CD8-positive, alpha-beta memory T cell (primary cell): ENCODE measurements at regions of chr14 and their contacts with region 1.

Region 1: DNA sequence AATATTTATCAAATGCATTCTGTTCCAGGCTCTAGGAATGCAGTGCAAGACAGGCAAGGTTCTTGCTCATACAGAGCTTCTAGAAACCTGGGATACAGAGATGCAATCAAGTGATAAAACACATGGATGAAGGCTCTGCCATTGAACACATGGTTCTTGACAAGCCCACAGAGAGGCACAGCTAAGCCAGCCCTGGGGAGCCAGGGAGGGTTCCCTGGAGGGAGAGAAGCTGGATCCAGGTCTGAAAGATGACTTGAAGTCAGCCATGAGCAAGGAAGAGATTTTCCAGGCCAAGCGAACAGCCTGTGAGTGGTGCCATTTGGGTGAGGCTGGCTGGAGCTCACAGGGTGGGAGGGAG is 66.2 kb downstream of the IRF2BPL start:
- DNase-seq: no peak
- H3K4me3 ChIP-seq: peak overlapping the region; percentile 60
- H3K4me3 Mint-ChIP-seq: peak overlapping the region; percentile 76 to 90 (median 81)
- H3K27ac ChIP-seq: peak overlapping the region; percentile 71
- H3K27ac Mint-ChIP-seq: peak overlapping the region; percentile 83 to 99 (median 94)
- H3K4me1 ChIP-seq: peaks cover 58% of the 10 kb centered on the region
- H3K4me1 Mint-ChIP-seq: peaks cover 71 to 81% (median 81%) of the 10 kb centered on the region in 3 donors
- H3K27me3 ChIP-seq: no peaks in the 10 kb centered on the region
- H3K27me3 Mint-ChIP-seq: no peaks in the 10 kb centered on the region

Region 2: DNA sequence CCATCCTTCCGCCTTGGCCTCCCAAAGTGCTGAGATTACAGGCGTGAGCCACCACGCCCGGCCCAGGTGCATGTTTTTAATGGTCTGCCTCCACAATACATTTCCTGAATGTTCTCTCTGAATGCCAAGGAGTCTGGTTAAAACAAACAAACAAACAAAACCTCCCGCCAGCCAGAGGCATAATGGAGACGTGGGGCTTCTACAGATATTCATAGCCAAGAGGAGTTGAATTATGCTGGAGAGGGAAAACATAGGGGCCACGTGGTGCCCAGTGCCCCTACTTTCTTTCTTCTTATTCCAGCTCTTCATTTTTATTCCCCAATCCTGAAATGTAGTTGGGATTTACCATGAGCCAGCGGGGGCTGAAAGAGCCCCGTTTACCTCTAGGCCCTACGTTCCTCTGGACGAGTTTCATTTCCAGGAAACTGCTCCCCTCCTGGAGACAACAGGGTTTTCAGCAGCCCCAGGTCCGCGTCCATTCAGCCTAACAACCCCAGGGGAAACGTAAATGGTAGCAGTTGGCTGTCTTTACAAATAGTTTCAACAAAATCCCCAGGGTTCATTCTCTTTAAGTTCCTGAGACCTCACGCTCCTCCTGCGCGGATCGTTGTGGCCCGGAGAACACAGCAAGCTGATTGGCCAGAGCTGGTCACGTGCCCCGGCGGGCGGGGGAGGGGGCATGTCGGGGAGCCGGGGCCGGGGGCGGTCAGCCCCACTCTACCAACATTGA is 694.8 kb before region 1 on chr14:
- CTCF ChIA-PET with region 1: no interaction called
- POLR2A ChIA-PET with region 1: no interaction called
- DNase-seq: no peak
- H3K4me3 ChIP-seq: no peak overlapping the region
- H3K4me3 Mint-ChIP-seq: peak overlapping the region in 2 of 7 donors; percentile 33 to 40
- H3K27ac ChIP-seq: no peak overlapping the region
- H3K27ac Mint-ChIP-seq: no peak overlapping the region
- H3K4me1 ChIP-seq: no peaks in the 10 kb centered on the region
- H3K4me1 Mint-ChIP-seq: peaks cover 0 to 6% (median 0%) of the 10 kb centered on the region in 3 donors
- H3K27me3 ChIP-seq: no peaks in the 10 kb centered on the region
- H3K27me3 Mint-ChIP-seq: peaks cover 17 to 76% of the 10 kb centered on the region in 2 donors

Region 3: DNA sequence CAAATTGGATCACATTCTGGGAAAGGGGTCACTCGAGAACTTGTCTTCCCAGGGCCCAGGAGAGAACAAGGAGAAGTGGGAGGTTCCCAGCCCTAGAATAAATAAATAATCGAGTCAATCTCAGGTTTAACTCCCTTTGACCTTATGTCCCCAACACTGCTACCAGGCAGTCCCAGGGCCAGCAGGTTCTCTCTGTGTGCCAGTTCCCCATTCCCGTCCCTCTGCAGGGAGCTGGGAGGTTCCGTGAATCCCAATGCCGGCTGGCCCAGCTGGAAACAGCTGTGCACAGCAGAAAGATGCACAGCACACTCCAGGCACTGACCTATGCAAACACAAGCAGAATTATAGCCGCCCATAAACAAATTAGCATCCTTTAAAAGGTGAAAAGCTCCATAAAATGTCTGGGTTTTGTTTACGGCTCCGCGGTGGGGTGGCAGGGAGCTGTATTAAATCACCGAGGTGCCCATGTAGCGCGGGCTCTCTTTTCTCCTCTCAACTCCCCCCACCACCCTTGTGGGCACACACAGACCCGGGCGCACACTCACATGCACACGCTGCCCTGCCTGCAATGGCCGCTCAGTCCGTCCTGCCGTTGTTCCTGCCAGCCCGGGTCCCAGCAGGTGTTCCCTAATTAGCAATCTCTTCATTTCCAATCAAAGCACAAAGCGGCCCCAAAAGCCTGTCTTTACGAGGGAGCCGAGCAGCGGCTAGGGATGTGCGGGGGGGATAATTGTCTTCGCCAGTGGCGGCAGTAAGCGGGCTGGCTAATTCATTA is 632.9 kb before region 1 on chr14:
- CTCF ChIA-PET with region 1: no interaction called
- POLR2A ChIA-PET with region 1: no interaction called
- DNase-seq: no peak
- H3K4me3 ChIP-seq: no peak overlapping the region
- H3K4me3 Mint-ChIP-seq: no peak overlapping the region
- H3K27ac ChIP-seq: no peak overlapping the region
- H3K27ac Mint-ChIP-seq: no peak overlapping the region
- H3K4me1 ChIP-seq: no peaks in the 10 kb centered on the region
- H3K4me1 Mint-ChIP-seq: no peaks in the 10 kb centered on the region
- H3K27me3 ChIP-seq: peaks cover 4% of the 10 kb centered on the region
- H3K27me3 Mint-ChIP-seq: peaks cover 11 to 50% of the 10 kb centered on the region in 2 donors

Region 4: DNA sequence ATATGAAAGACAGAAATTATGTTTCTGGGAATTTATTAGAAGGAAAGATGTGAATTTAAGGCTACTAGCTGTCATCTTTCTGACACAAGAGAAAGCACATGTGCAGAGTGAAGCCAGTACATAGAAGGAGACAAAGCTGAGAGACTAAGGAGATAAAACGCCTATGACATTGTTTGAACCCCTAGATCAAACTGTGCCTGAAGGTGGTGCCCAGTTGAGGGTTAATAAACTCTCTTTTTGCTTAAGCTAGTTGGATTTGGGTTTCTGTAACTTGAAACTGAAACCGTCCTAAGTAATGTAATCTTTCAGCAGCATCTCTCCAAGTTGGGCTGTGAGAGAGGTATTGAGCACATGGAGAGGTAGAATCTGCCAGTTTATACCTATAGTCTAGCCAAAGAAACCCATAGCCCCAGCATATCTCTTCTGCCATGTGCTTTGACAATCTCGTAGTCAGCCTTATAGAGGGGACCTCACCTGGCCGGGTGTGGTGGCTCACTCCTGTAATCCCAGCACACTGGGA is 51.9 kb before region 1 on chr14:
- CTCF ChIA-PET with region 1: interaction called, 20 read pairs
- POLR2A ChIA-PET with region 1: no interaction called
- DNase-seq: no peak
- H3K4me3 ChIP-seq: no peak overlapping the region
- H3K4me3 Mint-ChIP-seq: no peak overlapping the region
- H3K27ac ChIP-seq: no peak overlapping the region
- H3K27ac Mint-ChIP-seq: no peak overlapping the region
- H3K4me1 ChIP-seq: peaks cover 23% of the 10 kb centered on the region
- H3K4me1 Mint-ChIP-seq: peaks cover 15 to 21% (median 16%) of the 10 kb centered on the region in 3 donors
- H3K27me3 ChIP-seq: no peaks in the 10 kb centered on the region
- H3K27me3 Mint-ChIP-seq: no peaks in the 10 kb centered on the region

Region 5: GRCh38 chr14:77028384-77029231 is 66.3 kb after region 1 on chr14 and contains the start of gene IRF2BPL:
- CTCF ChIA-PET with region 1: interaction called, 36 read pairs
- POLR2A ChIA-PET with region 1: interaction called, 37 read pairs
- DNase-seq: peak; percentile 89 to 97 (median 93)
- H3K4me3 ChIP-seq: peak within 1 kb of the TSS; percentile 72
- H3K4me3 Mint-ChIP-seq: peak within 1 kb of the TSS; percentile 91 to 96 (median 94)
- H3K27ac ChIP-seq: peak within 1 kb of the TSS; percentile 87
- H3K27ac Mint-ChIP-seq: peak within 1 kb of the TSS; percentile 94 to 100 (median 98)
- H3K4me1 ChIP-seq: peaks cover 69% of the 10 kb centered on the region
- H3K4me1 Mint-ChIP-seq: peaks cover 51 to 69% (median 58%) of the 10 kb centered on the region in 3 donors
- H3K27me3 ChIP-seq: no peaks in the 10 kb centered on the region
- H3K27me3 Mint-ChIP-seq: peaks cover 0 to 3% of the 10 kb centered on the region in 2 donors
- total RNA-seq, gene IRF2BPL: 25.6 to 27.2 TPM

Region 6: DNA sequence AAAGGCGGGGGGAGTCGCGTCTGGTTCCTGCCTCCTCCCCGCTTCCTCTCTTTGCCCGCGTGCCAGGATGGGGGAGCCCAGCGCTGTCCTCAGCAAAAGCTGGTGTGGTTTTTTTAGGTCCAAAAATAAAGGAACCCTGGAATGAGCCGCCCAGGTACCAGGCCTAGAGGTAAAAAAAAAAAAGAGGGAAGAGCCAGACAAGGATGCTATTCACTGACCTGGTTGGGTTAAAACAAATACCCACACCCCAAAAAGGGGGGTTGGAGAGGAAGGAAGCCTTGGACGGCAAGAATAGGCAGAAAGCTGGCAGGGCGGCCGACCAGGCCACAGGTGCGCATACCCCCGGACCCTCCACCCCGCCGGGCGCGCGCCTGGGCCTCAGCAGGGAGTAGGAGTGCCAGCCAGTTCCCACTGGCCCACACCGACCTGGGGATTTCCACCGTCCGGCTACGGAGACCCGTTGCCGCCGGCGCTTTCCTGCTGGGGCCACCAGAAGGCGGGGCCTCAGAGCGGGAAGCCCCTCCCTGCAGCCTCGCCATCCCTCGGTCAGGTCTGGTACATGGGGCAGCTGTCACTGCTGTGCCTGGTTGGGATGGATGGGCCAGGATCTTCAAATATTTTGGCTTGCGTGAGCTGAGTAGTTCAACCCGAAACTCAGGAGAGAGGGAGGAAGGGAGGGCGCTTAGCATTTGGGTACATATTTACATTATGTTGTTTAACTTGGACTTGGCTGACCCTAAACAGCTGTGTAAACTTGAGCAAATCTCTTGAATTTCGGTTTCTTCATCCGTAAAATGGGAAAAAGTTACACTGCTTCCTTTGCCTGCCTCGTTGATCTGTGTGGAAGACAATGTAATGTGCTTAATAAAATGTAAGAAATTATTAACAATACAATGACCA is 71.6 kb after region 1 on chr14:
- CTCF ChIA-PET with region 1: interaction called, 36 read pairs
- POLR2A ChIA-PET with region 1: interaction called, 9 read pairs
- DNase-seq: peak; percentile 56 to 87 (median 76)
- H3K4me3 ChIP-seq: peak overlapping the region; percentile 78
- H3K4me3 Mint-ChIP-seq: peak overlapping the region; percentile 90 to 98 (median 91)
- H3K27ac ChIP-seq: peak overlapping the region; percentile 90
- H3K27ac Mint-ChIP-seq: peak overlapping the region; percentile 85 to 100 (median 98)
- H3K4me1 ChIP-seq: peaks cover 73% of the 10 kb centered on the region
- H3K4me1 Mint-ChIP-seq: peaks cover 68 to 83% (median 79%) of the 10 kb centered on the region in 3 donors
- H3K27me3 ChIP-seq: no peaks in the 10 kb centered on the region
- H3K27me3 Mint-ChIP-seq: peaks cover 0 to 2% of the 10 kb centered on the region in 2 donors

Region 7: DNA sequence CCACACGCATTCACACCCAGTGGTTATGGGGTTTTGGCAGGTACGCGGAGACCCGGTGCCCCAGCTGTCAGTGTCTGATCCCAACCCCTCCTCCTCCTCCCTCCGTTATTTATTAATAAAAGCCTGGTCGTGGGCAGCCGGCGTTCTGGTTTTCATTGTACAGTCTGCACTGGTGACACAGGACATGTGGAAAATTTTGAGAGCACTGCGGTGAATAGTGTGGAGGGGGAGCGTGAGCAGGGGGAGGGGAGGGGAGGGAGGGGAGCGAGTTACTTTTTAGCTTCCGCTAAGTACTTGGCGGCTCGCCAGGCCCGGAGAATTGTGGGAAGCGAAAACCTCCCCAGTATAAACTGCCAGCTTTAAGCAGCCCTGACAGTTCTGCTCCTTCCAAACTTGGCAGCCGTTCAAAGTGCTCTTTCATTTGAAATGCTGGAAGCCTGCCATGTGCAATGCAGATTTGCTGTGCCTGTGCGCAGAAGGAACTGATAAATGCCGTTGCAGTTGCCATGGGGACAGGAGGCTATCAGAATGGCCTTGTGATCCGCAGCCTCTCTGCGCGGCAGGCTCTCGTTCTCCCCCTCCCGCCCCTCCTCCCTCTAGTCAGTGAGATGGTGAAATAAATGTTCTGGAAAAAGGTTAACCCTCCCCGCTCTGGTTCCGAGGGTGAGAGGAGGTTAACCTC is 77.9 kb after region 1 on chr14:
- CTCF ChIA-PET with region 1: interaction called, 5 read pairs
- POLR2A ChIA-PET with region 1: interaction called, 17 read pairs
- DNase-seq: peak; percentile 93 to 99 (median 97)
- H3K4me3 ChIP-seq: peak overlapping the region; percentile 82
- H3K4me3 Mint-ChIP-seq: peak overlapping the region; percentile 84 to 92 (median 89)
- H3K27ac ChIP-seq: peak overlapping the region; percentile 89
- H3K27ac Mint-ChIP-seq: peak overlapping the region; percentile 95 to 100 (median 99)
- H3K4me1 ChIP-seq: peaks cover 80% of the 10 kb centered on the region
- H3K4me1 Mint-ChIP-seq: peaks cover 74 to 94% (median 89%) of the 10 kb centered on the region in 3 donors
- H3K27me3 ChIP-seq: no peaks in the 10 kb centered on the region
- H3K27me3 Mint-ChIP-seq: peaks cover 0 to 2% of the 10 kb centered on the region in 2 donors